ENCODE measurements at regions of chr16 and their contacts with region 1.

Region 1: GRCh38 chr16:89860747-89861304 is 12.6 kb upstream of the TCF25 start:
- DNase-seq: peak; percentile 71
- H3K4me3 Mint-ChIP-seq: no peak overlapping the region
- H3K27ac Mint-ChIP-seq: no peak overlapping the region
- H3K4me1 Mint-ChIP-seq: peaks cover 33% of the 10 kb centered on the region
- H3K27me3 Mint-ChIP-seq: no peaks in the 10 kb centered on the region

Region 2: GRCh38 chr16:89793955-89794354 is 66.9 kb before region 1 on chr16:
- intact Hi-C with region 1: loop called (anchors 1 kb)
- DNase-seq: no peak
- H3K4me3 Mint-ChIP-seq: no peak overlapping the region
- H3K27ac Mint-ChIP-seq: no peak overlapping the region
- H3K4me1 Mint-ChIP-seq: no peaks in the 10 kb centered on the region
- H3K27me3 Mint-ChIP-seq: no peaks in the 10 kb centered on the region

Region 3: GRCh38 chr16:89845417-89845816 is 15.4 kb before region 1 on chr16:
- intact Hi-C with region 1: no loop called
- DNase-seq: no peak
- H3K4me3 Mint-ChIP-seq: no peak overlapping the region
- H3K27ac Mint-ChIP-seq: no peak overlapping the region
- H3K4me1 Mint-ChIP-seq: no peaks in the 10 kb centered on the region
- H3K27me3 Mint-ChIP-seq: peaks cover 3% of the 10 kb centered on the region

Region 4: DNA sequence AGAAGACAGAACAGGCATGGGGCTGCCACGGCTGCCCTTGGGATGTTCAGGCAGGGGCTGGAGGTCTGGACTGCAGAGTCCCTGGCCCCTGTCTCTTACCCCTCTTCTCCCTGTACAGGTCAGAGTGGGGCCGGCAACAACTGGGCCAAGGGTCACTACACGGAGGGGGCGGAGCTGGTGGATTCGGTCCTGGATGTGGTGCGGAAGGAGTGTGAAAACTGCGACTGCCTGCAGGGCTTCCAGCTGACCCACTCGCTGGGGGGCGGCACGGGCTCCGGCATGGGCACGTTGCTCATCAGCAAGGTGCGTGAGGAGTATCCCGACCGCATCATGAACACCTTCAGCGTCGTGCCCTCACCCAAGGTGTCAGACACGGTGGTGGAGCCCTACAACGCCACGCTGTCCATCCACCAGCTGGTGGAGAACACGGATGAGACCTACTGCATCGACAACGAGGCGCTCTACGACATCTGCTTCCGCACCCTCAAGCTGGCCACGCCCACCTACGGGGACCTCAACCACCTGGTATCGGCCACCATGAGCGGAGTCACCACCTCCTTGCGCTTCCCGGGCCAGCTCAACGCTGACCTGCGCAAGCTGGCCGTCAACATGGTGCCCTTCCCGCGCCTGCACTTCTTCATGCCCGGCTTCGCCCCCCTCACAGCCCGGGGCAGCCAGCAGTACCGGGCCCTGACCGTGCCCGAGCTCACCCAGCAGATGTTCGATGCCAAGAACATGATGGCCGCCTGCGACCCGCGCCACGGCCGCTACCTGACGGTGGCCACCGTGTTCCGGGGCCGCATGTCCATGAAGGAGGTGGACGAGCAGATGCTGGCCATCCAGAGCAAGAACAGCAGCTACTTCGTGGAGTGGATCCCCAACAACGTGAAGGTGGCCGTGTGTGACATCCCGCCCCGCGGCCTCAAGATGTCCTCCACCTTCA is 74.1 kb after region 1 on chr16:
- intact Hi-C with region 1: no loop called
- DNase-seq: no peak
- H3K4me3 Mint-ChIP-seq: no peak overlapping the region
- H3K27ac Mint-ChIP-seq: no peak overlapping the region
- H3K4me1 Mint-ChIP-seq: no peaks in the 10 kb centered on the region
- H3K27me3 Mint-ChIP-seq: peaks cover 4% of the 10 kb centered on the region

Measured in activated T-helper 1 cell treated with anti-CD3 and anti-CD28 coated beads, Interleukin-12 subunit alpha, Interleukin-12 subunit beta, Interleukin-2, Interleukin-4 antibody, amounts not matched to agents 30 ng/mL and 10 ng/mL and 1 ng/mL, durations not matched to agents 14 hours and 24 hours and 36 hours (primary cell).